Gastrocnemius medialis (tissue), 4 donors: ENCODE measurements at regions of chr9 and their contacts with region 1.

Region 1: GRCh38 chr9:107172160-107172978 is 110.7 kb upstream of the RAD23B start:
- DNase-seq: peak; percentile 34 to 72
- ATAC-seq: peak; percentile 28 to 44
- H3K4me3 ChIP-seq: no peak overlapping the region
- H3K27ac ChIP-seq: peak overlapping the region; percentile 45 to 94 (median 74)
- H3K4me1 ChIP-seq: peaks cover 38 to 48% of the 10 kb centered on the region in 2 donors
- H3K27me3 ChIP-seq: no peaks in the 10 kb centered on the region
- CTCF ChIP-seq: peak; percentile 91 to 95 (median 92)
- POLR2A ChIP-seq: no peak

Region 2: GRCh38 chr9:105911104-105911911 is 1261.1 kb before region 1 on chr9:
- in situ Hi-C with region 1: no loop called
- intact Hi-C with region 1: loop called (anchors 10 kb)
- DNase-seq: no peak
- ATAC-seq: no peak
- H3K4me3 ChIP-seq: peak overlapping the region in 1 of 4 donors; percentile 21
- H3K27ac ChIP-seq: peak overlapping the region; percentile 86 to 99 (median 90)
- H3K4me1 ChIP-seq: peaks cover 24 to 34% of the 10 kb centered on the region in 2 donors
- H3K27me3 ChIP-seq: no peaks in the 10 kb centered on the region
- CTCF ChIP-seq: no peak
- POLR2A ChIP-seq: no peak

Region 3: DNA sequence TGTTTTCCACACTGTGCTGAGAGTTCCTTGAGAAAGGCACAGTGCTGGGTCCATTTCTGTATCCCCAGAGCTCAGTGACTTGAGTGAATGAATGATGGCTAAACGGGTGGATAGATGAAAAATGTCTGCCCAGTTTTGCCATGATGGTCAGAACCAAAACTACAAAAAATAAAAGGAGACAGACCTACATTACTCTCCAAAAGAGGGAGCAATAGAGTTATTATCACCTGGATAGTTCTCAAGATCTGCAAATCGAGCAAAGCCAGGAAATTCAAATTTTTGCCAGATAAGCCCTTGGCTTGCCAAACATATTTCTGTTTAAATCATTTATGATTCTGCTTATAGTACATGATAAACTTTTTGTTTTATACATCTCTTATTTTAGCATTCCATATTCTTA is 523.6 kb before region 1 on chr9:
- in situ Hi-C with region 1: loop called in 1 of 4 experiments (anchors 25 kb)
- intact Hi-C with region 1: no loop called
- DNase-seq: no peak
- ATAC-seq: no peak
- H3K4me3 ChIP-seq: no peak overlapping the region
- H3K27ac ChIP-seq: no peak overlapping the region
- H3K4me1 ChIP-seq: no peaks in the 10 kb centered on the region
- H3K27me3 ChIP-seq: no peaks in the 10 kb centered on the region
- CTCF ChIP-seq: peak in 2 of 5 experiments; percentile 19 to 33
- POLR2A ChIP-seq: no peak

Region 4: GRCh38 chr9:107087222-107087621 is 85.1 kb before region 1 on chr9:
- in situ Hi-C with region 1: loop called in 1 of 4 experiments (anchors 25 kb)
- intact Hi-C with region 1: loop called (anchors 10 kb)
- DNase-seq: peak in 1 of 2 donors; percentile 21
- ATAC-seq: peak; percentile 77 to 78
- H3K4me3 ChIP-seq: no peak overlapping the region
- H3K27ac ChIP-seq: no peak overlapping the region
- H3K4me1 ChIP-seq: peaks cover 17 to 19% of the 10 kb centered on the region in 2 donors
- H3K27me3 ChIP-seq: no peaks in the 10 kb centered on the region
- CTCF ChIP-seq: peak in 3 of 5 experiments; percentile 16 to 24 (median 23)
- POLR2A ChIP-seq: no peak

Region 5: GRCh38 chr9:107282753-107283625 is 110.6 kb after region 1 on chr9 and contains the start of gene RAD23B:
- in situ Hi-C with region 1: no loop called
- intact Hi-C with region 1: loop called (anchors 5 kb)
- DNase-seq: peak; percentile 97 to 98
- ATAC-seq: peak; percentile 78 to 79
- H3K4me3 ChIP-seq: peak within 1 kb of the TSS; percentile 73 to 91 (median 86)
- H3K27ac ChIP-seq: peak within 1 kb of the TSS; percentile 90 to 99 (median 97)
- H3K4me1 ChIP-seq: peaks cover 30 to 33% of the 10 kb centered on the region in 2 donors
- H3K27me3 ChIP-seq: no peaks in the 10 kb centered on the region
- CTCF ChIP-seq: peak in 2 of 5 experiments; percentile 3 to 25
- POLR2A ChIP-seq: peak; percentile 97 to 98
- total RNA-seq, gene RAD23B: 163 to 249 (median 188) TPM